Activated CD4-positive, alpha-beta T cell treated with anti-CD3 and anti-CD28 coated beads, Interleukin-2, amount 10 ng/mL, durations not matched to agents 24 days and 14 days (primary cell): ENCODE measurements at regions of chr5 and their contacts with region 1.

Region 1: GRCh38 chr5:3602785-3603502 is 7.3 kb downstream of the IRX1 start:
- DNase-seq: peak; percentile 55
- H3K4me3 Mint-ChIP-seq: no peak overlapping the region
- H3K27ac Mint-ChIP-seq: no peak overlapping the region
- H3K4me1 Mint-ChIP-seq: no peaks in the 10 kb centered on the region
- H3K27me3 Mint-ChIP-seq: peaks cover 63% of the 10 kb centered on the region

Region 2: GRCh38 chr5:2746561-2747032 is 856.3 kb before region 1 on chr5:
- intact Hi-C with region 1: loop called (anchors 5 kb)
- DNase-seq: peak; percentile 13
- H3K4me3 Mint-ChIP-seq: no peak overlapping the region
- H3K27ac Mint-ChIP-seq: no peak overlapping the region
- H3K4me1 Mint-ChIP-seq: peaks cover 3% of the 10 kb centered on the region
- H3K27me3 Mint-ChIP-seq: peaks cover 61% of the 10 kb centered on the region

Region 3: GRCh38 chr5:3118340-3118739 is 484.6 kb before region 1 on chr5:
- intact Hi-C with region 1: loop called (anchors 5 kb)
- DNase-seq: no peak
- H3K4me3 Mint-ChIP-seq: no peak overlapping the region
- H3K27ac Mint-ChIP-seq: no peak overlapping the region
- H3K4me1 Mint-ChIP-seq: no peaks in the 10 kb centered on the region
- H3K27me3 Mint-ChIP-seq: peaks cover 27% of the 10 kb centered on the region

Region 4: GRCh38 chr5:3287516-3287915 is 315.4 kb before region 1 on chr5:
- intact Hi-C with region 1: no loop called
- DNase-seq: no peak
- H3K4me3 Mint-ChIP-seq: no peak overlapping the region
- H3K27ac Mint-ChIP-seq: no peak overlapping the region
- H3K4me1 Mint-ChIP-seq: no peaks in the 10 kb centered on the region
- H3K27me3 Mint-ChIP-seq: no peaks in the 10 kb centered on the region